ENCODE measurements at regions of chr18 and their contacts with region 1.

Region 1: DNA sequence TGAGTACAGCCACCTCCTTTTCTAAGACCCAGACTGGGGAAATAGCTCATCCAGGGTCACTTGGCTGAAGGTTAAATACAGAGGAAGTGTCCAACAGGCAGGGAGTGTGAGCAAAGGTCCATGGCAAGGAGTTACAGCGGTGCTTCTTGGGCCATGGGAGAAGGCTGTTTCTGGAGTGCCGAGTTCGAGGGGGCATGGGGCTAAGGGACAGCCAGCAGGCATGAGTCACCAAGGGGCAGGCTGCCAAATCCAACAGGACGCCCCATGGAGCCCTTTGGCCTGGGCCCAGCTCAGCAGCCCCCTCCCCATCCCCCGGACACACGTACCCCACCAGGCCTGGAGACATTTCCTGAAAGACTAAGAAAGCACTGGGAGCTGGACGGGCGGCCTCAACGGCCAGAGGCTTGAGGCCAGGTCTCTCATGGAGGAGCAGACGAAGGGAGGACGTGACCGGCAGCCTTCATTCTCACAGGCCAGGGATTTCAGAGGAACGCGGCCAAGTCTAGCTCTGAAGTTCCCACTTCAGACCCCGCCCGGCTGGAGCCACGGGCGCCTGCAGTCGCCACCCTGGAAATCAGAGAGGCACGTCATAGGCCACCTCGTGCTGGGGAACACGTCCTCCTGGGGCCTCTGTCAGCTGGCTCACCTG is 160.4 kb downstream of the SMAD7 start:
- DNase-seq: peak; percentile 96 to 97
- ATAC-seq: peak; percentile 89
- H3K4me3 ChIP-seq: no peak overlapping the region
- H3K27ac ChIP-seq: peak overlapping the region; percentile 8 to 89
- H3K4me1 ChIP-seq: no peaks in the 10 kb centered on the region
- H3K27me3 ChIP-seq: no peaks in the 10 kb centered on the region

Region 2: GRCh38 chr18:48806551-48807261 is 16.4 kb after region 1 on chr18:
- intact Hi-C with region 1: loop called in 1 of 2 experiments (anchors 1 kb)
- DNase-seq: peak; percentile 65 to 78
- ATAC-seq: peak; percentile 78
- H3K4me3 ChIP-seq: no peak overlapping the region
- H3K27ac ChIP-seq: peak overlapping the region; percentile 61 to 97
- H3K4me1 ChIP-seq: peaks cover 0 to 2% of the 10 kb centered on the region in 2 donors
- H3K27me3 ChIP-seq: no peaks in the 10 kb centered on the region

Region 3: DNA sequence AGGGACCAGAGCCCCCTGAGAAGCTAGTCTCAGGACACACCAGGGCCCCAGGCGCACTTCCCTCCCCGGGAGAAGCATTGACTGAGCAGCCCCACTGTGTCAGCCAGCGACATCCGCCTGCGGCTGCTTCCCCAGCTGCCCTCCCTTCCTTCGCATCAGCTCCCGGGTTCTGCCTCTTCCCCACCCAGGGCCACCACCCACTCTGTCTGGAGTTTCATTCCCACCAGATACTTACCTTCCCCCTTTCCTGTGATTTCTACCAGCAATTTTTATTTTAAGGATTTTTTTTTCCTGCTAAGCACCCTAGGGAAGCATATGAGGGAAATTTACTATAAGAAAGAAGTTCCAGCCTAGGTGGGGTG is 61.2 kb after region 1 on chr18:
- intact Hi-C with region 1: no loop called
- DNase-seq: peak in 1 of 2 donors; percentile 88
- ATAC-seq: peak; percentile 54
- H3K4me3 ChIP-seq: no peak overlapping the region
- H3K27ac ChIP-seq: peak overlapping the region in 1 of 2 donors; percentile 71
- H3K4me1 ChIP-seq: no peaks in the 10 kb centered on the region
- H3K27me3 ChIP-seq: no peaks in the 10 kb centered on the region